Activated CD8-positive, alpha-beta T cell treated with anti-CD3 and anti-CD28 coated beads for 36 hours (primary cell): ENCODE measurements at regions of chr11 and their contacts with region 1.

Region 1: DNA sequence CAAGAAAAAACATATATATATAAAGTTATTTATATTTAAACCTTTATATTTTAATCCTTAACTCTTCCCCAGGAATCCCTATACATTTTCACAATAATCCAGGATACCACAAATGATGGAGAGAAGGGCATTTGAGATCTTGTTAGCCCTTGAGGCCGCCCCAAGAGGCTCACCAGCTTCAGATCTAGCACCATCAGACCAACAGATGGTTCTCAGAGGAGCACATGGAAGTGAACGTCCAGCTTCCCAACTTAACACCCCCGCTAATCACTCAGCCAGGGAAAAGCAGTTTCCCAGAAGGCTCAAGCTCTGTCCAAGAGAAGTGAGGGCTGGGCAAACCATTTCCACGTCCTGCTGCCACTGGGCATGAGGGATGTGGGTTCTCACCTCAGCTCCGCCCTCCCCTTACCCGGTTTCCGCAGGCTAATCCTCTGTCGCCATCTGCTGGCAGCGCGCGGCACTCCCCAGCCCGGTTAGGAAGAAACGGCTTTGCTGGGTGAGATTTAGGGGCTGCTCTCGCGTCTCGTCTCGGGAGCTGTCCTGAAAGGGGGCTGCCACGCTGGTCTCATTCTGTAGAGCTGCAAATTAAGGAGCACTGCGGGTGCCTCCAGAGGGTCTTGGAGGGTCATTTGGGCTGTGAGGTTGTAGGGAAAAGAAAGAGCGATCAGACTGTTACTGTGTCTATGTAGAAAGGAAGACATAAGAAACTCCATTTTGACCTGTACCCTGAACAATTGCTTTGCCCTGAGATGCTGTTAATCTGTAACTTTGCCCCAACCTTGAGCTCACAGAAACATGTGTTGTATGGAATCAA is 6.8 kb upstream of the FAM111A start:
- DNase-seq: peak; percentile 93
- ATAC-seq: peak; percentile 100
- H3K4me3 Mint-ChIP-seq: no peak overlapping the region
- H3K27ac Mint-ChIP-seq: no peak overlapping the region
- H3K4me1 Mint-ChIP-seq: peaks cover 8% of the 10 kb centered on the region
- H3K27me3 Mint-ChIP-seq: no peaks in the 10 kb centered on the region
- CTCF ChIP-seq: peak; percentile 93

Region 2: GRCh38 chr11:59053387-59053786 is 82.5 kb before region 1 on chr11:
- CTCF ChIA-PET with region 1: interaction called, 31 read pairs
- POLR2A ChIA-PET with region 1: no interaction called
- intact Hi-C with region 1: loop called (anchors 1 kb)
- DNase-seq: peak; percentile 88
- ATAC-seq: peak; percentile 64
- H3K4me3 Mint-ChIP-seq: no peak overlapping the region
- H3K27ac Mint-ChIP-seq: no peak overlapping the region
- H3K4me1 Mint-ChIP-seq: peaks cover 3% of the 10 kb centered on the region
- H3K27me3 Mint-ChIP-seq: peaks cover 17% of the 10 kb centered on the region
- CTCF ChIP-seq: peak; percentile 65

Region 3: GRCh38 chr11:59106363-59107336 is 29.2 kb before region 1 on chr11 and contains the start of gene FAM111B:
- CTCF ChIA-PET with region 1: interaction called, 74 read pairs
- POLR2A ChIA-PET with region 1: interaction called, 7 read pairs
- intact Hi-C with region 1: loop called (anchors 5 kb)
- DNase-seq: peak; percentile 84
- ATAC-seq: peak; percentile 89
- H3K4me3 Mint-ChIP-seq: peak within 1 kb of the TSS; percentile 86
- H3K27ac Mint-ChIP-seq: peak within 1 kb of the TSS; percentile 65
- H3K4me1 Mint-ChIP-seq: peaks cover 30% of the 10 kb centered on the region
- H3K27me3 Mint-ChIP-seq: peaks cover 48% of the 10 kb centered on the region
- CTCF ChIP-seq: no peak
- total RNA-seq, gene FAM111B: 18.2 to 18.3 TPM

Region 4: GRCh38 chr11:59152312-59152951 is 16.6 kb after region 1 on chr11:
- CTCF ChIA-PET with region 1: interaction called, 143 read pairs
- POLR2A ChIA-PET with region 1: no interaction called
- intact Hi-C with region 1: no loop called
- DNase-seq: peak; percentile 45
- ATAC-seq: peak; percentile 95
- H3K4me3 Mint-ChIP-seq: peak overlapping the region; percentile 55
- H3K27ac Mint-ChIP-seq: peak overlapping the region; percentile 91
- H3K4me1 Mint-ChIP-seq: peaks cover 36% of the 10 kb centered on the region
- H3K27me3 Mint-ChIP-seq: no peaks in the 10 kb centered on the region
- CTCF ChIP-seq: no peak

Region 5: DNA sequence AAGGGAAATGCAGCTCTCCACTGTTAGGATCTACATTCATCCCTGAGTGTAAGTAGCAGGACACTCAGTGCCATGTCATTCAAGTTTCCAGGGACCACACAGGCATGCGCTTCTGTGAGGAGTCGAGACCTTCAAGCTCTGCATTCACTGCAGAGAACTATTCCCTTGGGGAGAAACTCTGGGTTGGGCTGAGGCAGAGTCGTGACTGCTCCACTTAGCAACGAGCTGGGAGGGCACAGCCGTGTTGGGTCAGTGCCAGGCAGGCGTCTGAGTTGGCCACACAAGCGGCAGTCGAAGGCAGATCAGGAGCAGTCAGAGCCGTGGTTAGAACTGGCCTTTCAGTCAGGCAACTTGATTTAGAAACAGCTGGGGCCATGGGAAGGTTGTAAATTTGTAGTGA is 62.1 kb after region 1 on chr11:
- CTCF ChIA-PET with region 1: no interaction called
- POLR2A ChIA-PET with region 1: no interaction called
- intact Hi-C with region 1: no loop called
- DNase-seq: no peak
- ATAC-seq: no peak
- H3K4me3 Mint-ChIP-seq: no peak overlapping the region
- H3K27ac Mint-ChIP-seq: no peak overlapping the region
- H3K4me1 Mint-ChIP-seq: peaks cover 16% of the 10 kb centered on the region
- H3K27me3 Mint-ChIP-seq: peaks cover 3% of the 10 kb centered on the region
- CTCF ChIP-seq: no peak